ENCODE measurements at regions of chr15 and their contacts with region 1.

Region 1: GRCh38 chr15:101088788-101089583 is 162.9 kb downstream of the CHSY1 start:
- DNase-seq: peak in 40 of 42 donors; percentile 27 to 87 (median 70)

Region 2: GRCh38 chr15:101121511-101122090 is 32.6 kb after region 1 on chr15:
- intact Hi-C with region 1: no loop called
- DNase-seq: peak; percentile 25 to 79 (median 54)

Region 3: GRCh38 chr15:101251830-101252820 is 163.1 kb after region 1 on chr15 and contains the start of gene CHSY1:
- intact Hi-C with region 1: loop called (anchors 2 kb)
- DNase-seq: peak; percentile 82 to 96 (median 92)

Measured in head of caudate nucleus (tissue), 42 donors.